Activated CD4-positive, alpha-beta T cell treated with anti-CD3 and anti-CD28 coated beads for 36 hours (primary cell): ENCODE measurements at regions of chr12 and their contacts with region 1.

Region 1: GRCh38 chr12:54935235-54935951 is 49.2 kb downstream of the TESPA1 start:
- DNase-seq: peak; percentile 62
- ATAC-seq: peak; percentile 92
- H3K4me3 Mint-ChIP-seq: peak overlapping the region; percentile 45
- H3K27ac Mint-ChIP-seq: peak overlapping the region; percentile 96
- H3K4me1 Mint-ChIP-seq: peaks cover 69% of the 10 kb centered on the region
- H3K27me3 Mint-ChIP-seq: no peaks in the 10 kb centered on the region

Region 2: DNA sequence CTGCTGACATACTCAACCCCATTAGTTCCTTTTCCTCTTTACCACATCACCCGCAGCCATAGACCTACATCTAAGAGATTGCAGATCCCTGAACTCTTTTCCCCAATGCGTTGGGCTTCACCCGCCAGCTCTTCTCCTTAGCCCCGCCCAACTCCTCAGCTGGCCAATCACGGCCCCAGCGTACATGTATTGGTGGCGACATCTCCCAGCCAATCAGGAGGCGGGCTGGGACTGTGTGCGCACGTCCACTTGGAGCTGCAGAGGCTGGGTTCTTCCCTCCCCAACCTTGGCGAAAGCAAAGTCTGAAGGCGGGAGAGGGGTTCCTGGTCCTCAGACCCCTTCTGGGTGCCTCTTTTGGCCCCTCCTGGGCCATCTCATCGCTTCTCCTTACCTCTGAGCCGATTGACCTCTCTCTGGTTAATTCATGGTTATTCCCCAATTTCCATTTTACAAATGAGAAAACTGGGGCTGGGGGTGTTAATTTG is 375.0 kb before region 1 on chr12:
- CTCF ChIA-PET with region 1: no interaction called
- POLR2A ChIA-PET with region 1: no interaction called
- intact Hi-C with region 1: loop called in 1 of 2 experiments (anchors 2 kb)
- DNase-seq: peak; percentile 95
- ATAC-seq: peak; percentile 100
- H3K4me3 Mint-ChIP-seq: peak overlapping the region; percentile 66
- H3K27ac Mint-ChIP-seq: peak overlapping the region; percentile 93
- H3K4me1 Mint-ChIP-seq: peaks cover 33% of the 10 kb centered on the region
- H3K27me3 Mint-ChIP-seq: no peaks in the 10 kb centered on the region

Region 3: DNA sequence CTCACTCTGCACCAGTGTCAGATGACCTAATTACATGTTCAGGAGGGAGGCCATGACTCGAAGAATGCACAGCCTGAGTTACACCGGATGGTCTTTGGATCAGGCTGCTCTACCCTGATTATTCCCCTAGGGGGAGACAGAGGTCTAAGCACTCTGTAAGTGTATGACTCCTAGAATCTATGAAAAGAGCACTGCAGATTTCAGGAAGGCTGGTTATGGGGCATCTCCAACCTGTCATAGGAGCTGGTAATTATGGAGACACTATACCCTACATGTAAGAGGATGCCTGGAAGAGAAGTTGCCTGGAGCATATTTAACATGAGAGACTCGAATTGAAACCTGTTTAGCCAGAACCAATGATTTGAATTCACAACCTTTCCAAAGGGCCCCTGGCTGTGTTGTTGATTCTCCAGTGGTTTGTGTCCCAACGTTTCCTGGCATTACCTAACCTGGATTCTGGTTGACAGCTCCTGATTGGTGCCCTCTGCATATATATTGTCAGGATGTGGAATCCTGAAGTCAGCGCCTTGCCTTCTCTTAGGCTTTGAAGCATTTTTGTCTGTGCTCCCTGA is 81.3 kb before region 1 on chr12 and contains the start of gene MUCL1:
- CTCF ChIA-PET with region 1: interaction called, 6 read pairs
- POLR2A ChIA-PET with region 1: no interaction called
- intact Hi-C with region 1: loop called (anchors 1 to 2 kb)
- DNase-seq: peak; percentile 82
- ATAC-seq: peak; percentile 95
- H3K4me3 Mint-ChIP-seq: no peak within 1 kb of the TSS
- H3K27ac Mint-ChIP-seq: no peak within 1 kb of the TSS
- H3K4me1 Mint-ChIP-seq: peaks cover 18% of the 10 kb centered on the region
- H3K27me3 Mint-ChIP-seq: no peaks in the 10 kb centered on the region
- total RNA-seq, gene MUCL1: not detected

Region 4: DNA sequence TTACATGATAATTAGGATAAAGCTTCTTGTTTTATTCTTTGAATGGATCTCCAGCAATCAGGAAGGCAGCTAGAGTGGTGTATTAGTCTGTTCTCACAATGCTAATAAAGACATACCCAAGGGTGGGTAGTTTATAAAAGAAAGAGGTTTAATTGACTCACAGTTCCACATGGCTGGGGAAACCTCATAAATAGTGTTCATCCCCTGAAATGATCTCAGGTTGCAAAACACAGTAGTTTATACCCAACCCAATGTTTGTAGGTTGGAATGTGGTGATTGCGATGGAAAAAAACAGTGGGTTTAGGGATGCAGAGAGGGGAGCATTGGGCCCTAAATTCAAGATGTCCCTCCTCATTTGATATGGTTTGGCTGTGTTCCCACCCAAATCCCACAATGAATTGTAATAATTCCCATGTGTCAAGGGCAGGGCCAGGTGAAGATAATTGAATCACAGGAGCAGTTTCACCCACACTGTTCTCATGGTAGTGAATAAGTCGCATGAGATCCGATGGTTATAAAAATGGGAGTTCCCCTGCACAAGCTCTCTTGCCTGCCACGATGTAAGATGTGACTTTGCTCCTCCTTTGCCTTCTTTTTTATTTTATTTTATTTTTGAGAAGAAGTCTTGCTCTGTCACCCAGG is 69.6 kb before region 1 on chr12:
- CTCF ChIA-PET with region 1: interaction called, 3 read pairs
- POLR2A ChIA-PET with region 1: no interaction called
- intact Hi-C with region 1: loop called in 1 of 2 experiments (anchors 2 kb)
- DNase-seq: peak; percentile 10
- ATAC-seq: peak; percentile 80
- H3K4me3 Mint-ChIP-seq: no peak overlapping the region
- H3K27ac Mint-ChIP-seq: no peak overlapping the region
- H3K4me1 Mint-ChIP-seq: peaks cover 29% of the 10 kb centered on the region
- H3K27me3 Mint-ChIP-seq: peaks cover 25% of the 10 kb centered on the region

Region 5: DNA sequence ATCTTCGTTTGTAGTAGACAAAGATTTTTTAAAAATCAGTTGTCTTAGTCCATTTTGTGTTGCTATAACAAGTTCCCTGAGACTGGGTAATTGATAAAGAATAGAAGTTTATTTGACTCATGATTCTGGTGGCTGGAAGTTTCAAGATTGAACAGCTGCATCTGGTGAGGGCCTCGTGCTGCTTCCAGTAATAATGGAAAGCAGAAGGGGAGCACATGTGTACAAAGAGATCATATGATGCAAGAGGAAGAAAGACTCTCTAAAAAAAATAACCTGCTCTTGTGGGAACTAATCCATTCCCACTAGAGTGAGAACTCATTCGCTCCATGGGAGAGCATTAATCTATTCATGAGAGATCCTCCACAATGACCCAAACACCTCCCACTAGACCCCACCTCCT is 56.2 kb before region 1 on chr12:
- CTCF ChIA-PET with region 1: no interaction called
- POLR2A ChIA-PET with region 1: no interaction called
- intact Hi-C with region 1: loop called in 1 of 2 experiments (anchors 2 kb)
- DNase-seq: peak; percentile 40
- ATAC-seq: peak; percentile 55
- H3K4me3 Mint-ChIP-seq: no peak overlapping the region
- H3K27ac Mint-ChIP-seq: peak overlapping the region; percentile 88
- H3K4me1 Mint-ChIP-seq: peaks cover 11% of the 10 kb centered on the region
- H3K27me3 Mint-ChIP-seq: peaks cover 18% of the 10 kb centered on the region

Region 6: DNA sequence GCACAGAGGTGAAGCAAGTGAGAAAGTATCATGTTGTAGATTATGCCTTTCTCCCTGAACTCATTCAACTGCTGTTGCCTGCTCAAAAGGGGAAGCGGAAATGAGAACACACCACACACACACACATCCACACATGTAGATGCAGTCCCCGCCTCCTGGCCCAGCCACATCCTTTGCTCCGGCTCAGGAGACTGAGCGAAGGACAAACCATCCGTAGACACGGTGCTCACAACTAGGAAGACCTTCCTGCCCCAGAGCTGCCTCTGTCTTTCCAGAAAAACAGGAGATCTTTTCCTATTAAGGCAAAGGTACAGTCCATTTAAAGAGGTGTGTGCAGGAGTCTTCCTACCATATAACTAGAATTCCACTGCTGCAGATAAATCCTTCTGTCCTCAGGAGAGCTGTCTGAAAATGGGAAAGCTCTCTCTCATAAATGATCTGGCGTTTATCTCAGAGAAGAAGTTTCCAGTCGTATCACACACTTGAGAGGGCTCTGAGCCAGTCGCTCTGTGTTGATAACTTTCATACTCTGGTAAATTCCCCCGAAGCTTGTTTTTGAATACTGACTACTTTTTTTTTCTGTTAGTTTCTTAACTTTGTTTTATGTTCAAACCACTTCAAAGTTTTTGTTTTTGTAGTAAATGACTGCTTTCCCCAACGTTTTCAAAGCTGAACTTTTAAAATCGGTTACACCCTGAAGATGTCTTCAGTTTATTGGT is 49.4 kb after region 1 on chr12 and contains the start of gene TESPA1:
- CTCF ChIA-PET with region 1: interaction called, 3 read pairs
- POLR2A ChIA-PET with region 1: interaction called, 4 read pairs
- intact Hi-C with region 1: loop called (anchors 1 kb)
- DNase-seq: peak; percentile 92
- ATAC-seq: peak; percentile 87
- H3K4me3 Mint-ChIP-seq: peak within 1 kb of the TSS; percentile 78
- H3K27ac Mint-ChIP-seq: peak within 1 kb of the TSS; percentile 95
- H3K4me1 Mint-ChIP-seq: peaks cover 64% of the 10 kb centered on the region
- H3K27me3 Mint-ChIP-seq: no peaks in the 10 kb centered on the region
- total RNA-seq, gene TESPA1: 81.0 to 107 TPM